ENCODE measurements at regions of chr4 and their contacts with region 1.

Region 1: DNA sequence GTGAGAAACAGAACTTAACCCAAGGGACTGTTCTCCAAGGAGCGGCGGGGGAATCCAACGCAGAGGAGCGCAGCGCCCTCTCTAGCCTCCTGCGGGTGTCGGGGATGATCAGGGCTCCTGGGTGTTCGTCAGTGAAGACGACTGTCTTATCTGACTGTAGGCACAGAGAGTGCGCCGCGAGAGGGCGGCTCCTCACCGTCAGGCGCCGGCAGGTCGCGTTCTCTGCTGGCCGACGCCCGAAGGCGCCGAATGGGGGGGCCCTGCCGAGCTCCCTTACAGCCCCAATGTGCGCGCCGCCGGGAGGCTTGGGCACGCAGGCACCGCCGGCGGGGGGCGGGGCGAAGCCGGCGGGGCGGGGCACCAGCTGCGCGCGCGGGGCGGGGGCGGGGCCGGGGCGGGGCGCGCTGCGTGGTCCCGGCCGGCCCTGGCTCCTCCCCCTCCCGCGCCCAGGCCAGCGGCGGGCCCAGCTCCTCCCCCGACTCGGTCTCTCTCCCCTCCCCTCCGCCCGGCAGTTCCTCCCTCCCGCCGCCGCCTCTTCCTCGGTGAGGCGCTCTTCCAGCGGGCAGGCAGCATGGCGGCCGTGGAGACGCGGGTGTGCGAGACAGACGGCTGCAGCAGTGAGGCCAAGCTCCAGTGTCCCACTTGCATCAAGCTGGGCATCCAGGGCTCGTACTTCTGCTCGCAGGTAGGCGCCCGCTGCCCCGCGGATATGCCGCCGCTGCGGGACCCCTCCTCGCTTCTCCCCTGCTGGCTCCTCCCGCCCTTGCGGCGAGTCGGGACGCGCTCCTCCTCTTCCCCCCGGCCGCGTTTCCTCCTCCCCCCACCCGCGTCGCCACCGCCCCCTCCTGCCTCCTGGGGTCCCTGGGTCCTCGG is at the start of gene METAP1:
- DNase-seq: peak; percentile 82 to 95
- ATAC-seq: peak; percentile 96
- H3K4me3 ChIP-seq: peak within 1 kb of the TSS; percentile 91
- H3K27ac ChIP-seq: peak within 1 kb of the TSS; percentile 93 to 99
- H3K4me1 ChIP-seq: peaks cover 25% of the 10 kb centered on the region; the same call in 2 of the 3 replicates
- CTCF ChIP-seq: peak; percentile 82
- EP300 ChIP-seq: no peak
- POLR2A ChIP-seq: peak; percentile 88
- RAD21 ChIP-seq: peak; percentile 73 to 89
- polyA plus RNA-seq, gene METAP1: 76.8 and 106 TPM in 2 replicates

Region 2: DNA sequence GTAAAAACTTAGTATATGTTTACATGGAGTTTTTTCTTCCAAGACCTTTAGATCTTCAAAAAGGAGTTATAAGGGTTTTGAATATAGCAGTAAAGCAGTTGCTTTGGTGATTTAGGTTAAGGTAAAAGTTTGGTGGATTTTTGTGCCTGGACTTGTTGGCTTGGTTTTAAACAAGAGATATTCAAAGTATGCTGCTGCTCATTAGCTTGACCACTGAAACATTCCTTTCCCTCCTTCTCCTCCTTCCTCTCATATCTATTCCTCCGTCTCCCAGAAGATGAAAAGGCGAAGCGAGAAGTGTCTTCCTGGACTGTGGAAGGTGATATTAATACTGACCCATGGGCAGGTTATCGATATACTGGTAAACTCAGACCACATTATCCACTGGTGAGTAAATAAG is 38.5 kb after region 1 on chr4:
- CTCF ChIA-PET with region 1: interaction called, 13 read pairs
- POLR2A ChIA-PET with region 1: interaction called, 4 read pairs
- DNase-seq: no peak
- ATAC-seq: no peak
- H3K4me3 ChIP-seq: no peak overlapping the region
- H3K27ac ChIP-seq: no peak overlapping the region
- H3K4me1 ChIP-seq: peaks cover 6% of the 10 kb centered on the region; the same call in 2 of the 3 replicates
- CTCF ChIP-seq: no peak
- EP300 ChIP-seq: no peak
- POLR2A ChIP-seq: no peak
- RAD21 ChIP-seq: no peak

Region 3: GRCh38 chr4:99088481-99089365 is 93.3 kb after region 1 on chr4 and contains the start of gene ADH5:
- CTCF ChIA-PET with region 1: interaction called, 6 read pairs
- POLR2A ChIA-PET with region 1: interaction called, 35 read pairs
- DNase-seq: peak; percentile 74 to 81
- ATAC-seq: peak; percentile 96
- H3K4me3 ChIP-seq: peak within 1 kb of the TSS; percentile 95
- H3K27ac ChIP-seq: peak within 1 kb of the TSS; percentile 93 to 99
- H3K4me1 ChIP-seq: peaks cover 16% of the 10 kb centered on the region
- CTCF ChIP-seq: no peak
- EP300 ChIP-seq: no peak
- POLR2A ChIP-seq: peak; percentile 91
- RAD21 ChIP-seq: no peak
- polyA plus RNA-seq, gene ADH5: 134 and 152 TPM in 2 replicates

Region 4: DNA sequence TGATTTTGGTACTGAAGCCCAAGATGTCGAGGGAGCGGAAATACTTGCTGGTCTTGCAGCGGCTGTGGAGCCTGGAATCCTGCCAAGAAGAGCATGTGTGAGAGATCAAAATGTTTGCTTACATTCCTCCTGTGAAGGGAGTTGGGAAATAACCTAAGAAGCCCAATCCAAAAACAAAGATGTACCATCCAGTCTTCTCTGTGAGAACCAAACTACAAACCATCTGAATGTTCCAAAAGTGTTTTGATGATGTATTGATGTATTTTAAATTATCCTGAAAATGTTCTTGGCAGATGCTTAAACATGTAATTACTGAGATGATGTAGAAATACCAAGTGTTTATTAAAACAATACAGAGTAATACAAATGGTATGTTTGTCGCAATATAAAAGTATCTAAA is 305.5 kb after region 1 on chr4:
- CTCF ChIA-PET with region 1: no interaction called
- POLR2A ChIA-PET with region 1: no interaction called
- DNase-seq: peak in 1 of 2 experiments; percentile 11
- ATAC-seq: no peak
- H3K4me3 ChIP-seq: no peak overlapping the region
- H3K27ac ChIP-seq: no peak overlapping the region
- H3K4me1 ChIP-seq: no peaks in the 10 kb centered on the region
- CTCF ChIP-seq: no peak
- EP300 ChIP-seq: no peak
- POLR2A ChIP-seq: no peak
- RAD21 ChIP-seq: no peak

Measured in A549 (cell line).